ENCODE measurements at regions of chr2 and their contacts with region 1.

Region 1: GRCh38 chr2:127479219-127479825 is 47.0 kb downstream of the IWS1 start:
- DNase-seq: no peak
- H3K4me3 Mint-ChIP-seq: no peak overlapping the region
- H3K27ac Mint-ChIP-seq: no peak overlapping the region
- H3K4me1 Mint-ChIP-seq: no peaks in the 10 kb centered on the region
- H3K27me3 Mint-ChIP-seq: no peaks in the 10 kb centered on the region

Region 2: GRCh38 chr2:127293748-127294562 is 185.4 kb before region 1 on chr2 and contains the start of gene ERCC3:
- CTCF ChIA-PET with region 1: interaction called, 19 read pairs
- POLR2A ChIA-PET with region 1: no interaction called
- intact Hi-C with region 1: no loop called
- DNase-seq: peak; percentile 89
- H3K4me3 Mint-ChIP-seq: peak within 1 kb of the TSS; percentile 100
- H3K27ac Mint-ChIP-seq: peak within 1 kb of the TSS; percentile 97
- H3K4me1 Mint-ChIP-seq: peaks cover 28% of the 10 kb centered on the region
- H3K27me3 Mint-ChIP-seq: no peaks in the 10 kb centered on the region
- total RNA-seq, gene ERCC3: 46.1 to 47.3 TPM

Region 3: GRCh38 chr2:127355386-127356008 is 123.8 kb before region 1 on chr2:
- CTCF ChIA-PET with region 1: interaction called, 7 read pairs
- POLR2A ChIA-PET with region 1: no interaction called
- intact Hi-C with region 1: loop called (anchors 2 kb)
- DNase-seq: peak; percentile 27
- H3K4me3 Mint-ChIP-seq: no peak overlapping the region
- H3K27ac Mint-ChIP-seq: no peak overlapping the region
- H3K4me1 Mint-ChIP-seq: peaks cover 44% of the 10 kb centered on the region
- H3K27me3 Mint-ChIP-seq: no peaks in the 10 kb centered on the region

Region 4: DNA sequence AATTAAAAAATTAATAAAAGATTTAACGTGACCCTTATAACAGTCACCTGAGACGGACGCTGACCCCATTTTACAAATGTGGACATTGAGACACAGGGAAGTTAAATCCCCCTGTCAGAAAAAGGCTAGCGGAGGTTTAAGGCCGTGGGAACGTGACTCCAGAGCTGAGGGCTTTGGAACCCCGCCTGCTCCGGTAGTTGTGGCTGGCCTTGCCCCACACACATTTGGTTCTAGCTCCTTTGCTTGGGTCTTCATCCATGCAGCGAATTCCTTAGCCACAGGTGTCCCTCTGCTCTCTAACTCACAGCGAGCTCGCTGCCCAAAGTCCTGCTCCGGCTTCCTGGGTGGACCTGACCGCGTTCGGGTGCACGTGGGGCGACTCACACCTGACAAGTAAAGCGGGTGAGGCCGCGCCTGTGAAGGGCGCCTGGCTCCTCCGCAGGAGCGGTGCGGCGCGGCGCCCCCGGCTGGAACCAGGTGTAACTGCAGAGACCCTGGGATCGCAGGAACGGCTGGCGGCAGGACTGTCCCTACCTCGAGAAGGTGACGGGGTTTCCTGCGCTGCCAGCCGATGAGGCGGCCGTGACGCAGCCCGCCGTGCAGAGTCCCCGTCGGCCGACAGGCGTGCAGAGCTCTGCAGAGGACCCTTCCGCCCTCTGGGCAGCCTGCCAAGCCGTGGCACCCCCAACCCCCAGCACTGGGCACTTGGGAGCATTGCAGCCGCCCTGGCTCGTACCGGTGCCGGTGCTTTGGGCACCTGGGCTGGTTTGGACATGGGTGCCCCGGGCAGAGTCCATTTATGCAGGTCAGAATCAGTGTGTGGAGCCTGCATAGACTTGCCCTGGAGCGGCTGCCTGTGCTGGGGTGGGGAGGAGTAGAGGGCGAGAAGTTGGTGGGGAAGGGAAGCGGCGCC is 63.5 kb before region 1 on chr2:
- CTCF ChIA-PET with region 1: interaction called, 21 read pairs
- POLR2A ChIA-PET with region 1: no interaction called
- intact Hi-C with region 1: no loop called
- DNase-seq: peak; percentile 91
- H3K4me3 Mint-ChIP-seq: peak overlapping the region; percentile 54
- H3K27ac Mint-ChIP-seq: no peak overlapping the region
- H3K4me1 Mint-ChIP-seq: peaks cover 34% of the 10 kb centered on the region
- H3K27me3 Mint-ChIP-seq: peaks cover 13% of the 10 kb centered on the region

Region 5: DNA sequence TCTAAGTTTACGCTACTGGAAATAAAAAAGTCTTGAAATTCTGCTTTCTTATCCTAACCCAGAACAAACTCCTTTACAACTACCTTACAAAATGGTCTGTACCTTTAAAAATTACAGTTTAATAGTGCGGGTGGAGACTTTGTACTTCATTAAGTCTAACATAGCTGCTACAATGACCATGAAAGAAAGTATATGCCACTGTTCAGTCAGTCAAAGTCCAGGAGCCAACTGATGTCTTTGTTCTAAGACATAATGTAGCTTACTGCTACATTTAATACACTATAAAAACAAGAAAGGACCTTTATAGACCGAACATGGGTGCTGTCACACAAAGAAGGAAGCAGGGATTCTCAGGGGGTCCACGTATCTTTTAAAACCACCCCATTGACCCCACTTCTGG is 11.0 kb after region 1 on chr2:
- CTCF ChIA-PET with region 1: interaction called, 10 read pairs
- POLR2A ChIA-PET with region 1: no interaction called
- intact Hi-C with region 1: no loop called
- DNase-seq: no peak
- H3K4me3 Mint-ChIP-seq: no peak overlapping the region
- H3K27ac Mint-ChIP-seq: no peak overlapping the region
- H3K4me1 Mint-ChIP-seq: peaks cover 28% of the 10 kb centered on the region
- H3K27me3 Mint-ChIP-seq: no peaks in the 10 kb centered on the region

Region 6: GRCh38 chr2:127545189-127545588 is 65.9 kb after region 1 on chr2:
- CTCF ChIA-PET with region 1: no interaction called
- POLR2A ChIA-PET with region 1: no interaction called
- intact Hi-C with region 1: no loop called
- DNase-seq: no peak
- H3K4me3 Mint-ChIP-seq: no peak overlapping the region
- H3K27ac Mint-ChIP-seq: no peak overlapping the region
- H3K4me1 Mint-ChIP-seq: no peaks in the 10 kb centered on the region
- H3K27me3 Mint-ChIP-seq: peaks cover 13% of the 10 kb centered on the region